T-cell (primary cell): ENCODE measurements at regions of chr12 and their contacts with region 1.

Region 1: DNA sequence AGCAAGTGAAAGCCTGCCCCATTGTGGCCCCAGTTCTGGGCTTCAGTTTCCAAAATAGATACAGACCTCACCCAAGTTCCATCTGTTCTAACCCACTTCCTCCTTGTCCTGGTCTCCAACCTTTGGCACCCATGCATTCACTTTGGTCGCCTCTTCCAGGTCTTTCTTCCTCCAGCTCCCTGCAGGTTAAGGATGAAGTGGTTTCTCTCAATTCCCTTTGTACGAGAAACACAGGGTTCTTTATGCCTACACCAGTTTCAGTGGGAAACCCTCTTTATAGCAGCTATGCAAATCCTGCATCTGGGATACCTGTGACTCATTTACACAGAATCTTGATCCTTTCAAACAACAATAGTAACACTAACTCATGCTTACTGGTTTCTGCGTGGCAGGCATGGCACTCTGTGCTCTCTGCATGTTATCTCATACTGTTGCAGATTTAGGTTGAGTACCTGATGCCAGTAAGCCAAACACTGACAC is 110.6 kb upstream of the AMIGO2 start:
- DNase-seq: no peak
- ATAC-seq: no peak
- H3K4me3 ChIP-seq: no peak overlapping the region
- H3K4me3 Mint-ChIP-seq: peak overlapping the region in 2 of 3 donors; percentile 34 to 74
- H3K27ac ChIP-seq: peak overlapping the region; percentile 67
- H3K27ac Mint-ChIP-seq: peak overlapping the region; percentile 91 to 99
- H3K4me1 ChIP-seq: peaks cover 41 to 60% of the 10 kb centered on the region in 2 experiments
- H3K4me1 Mint-ChIP-seq: peaks cover 86 to 92% (median 90%) of the 10 kb centered on the region in 3 donors
- H3K27me3 ChIP-seq: no peaks in the 10 kb centered on the region
- H3K27me3 Mint-ChIP-seq: no peaks in the 10 kb centered on the region

Region 2: DNA sequence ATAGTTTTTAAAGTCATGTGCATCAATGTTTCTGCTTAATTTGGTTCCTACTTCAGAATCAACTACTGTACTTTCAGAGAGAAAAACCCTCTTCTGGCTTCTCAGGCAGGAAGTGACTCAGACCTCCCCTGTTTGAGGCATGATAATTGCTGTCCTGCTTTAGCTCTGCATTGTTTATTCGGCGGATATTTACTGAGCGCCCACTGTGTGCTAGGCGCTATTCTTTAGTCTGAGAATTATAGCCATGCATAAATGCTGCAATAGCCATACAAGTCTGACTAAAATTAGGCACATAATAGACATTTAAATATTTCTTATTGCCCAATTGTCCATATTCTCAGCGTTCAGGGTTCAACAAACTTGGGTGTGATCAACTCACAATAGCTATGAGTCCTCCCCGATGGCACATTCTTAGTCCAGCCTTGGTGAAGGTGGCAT is 104.5 kb before region 1 on chr12:
- CTCF ChIA-PET with region 1: interaction called in 1 of 2 experiments, 4 read pairs
- POLR2A ChIA-PET with region 1: interaction called in 1 of 2 experiments, 21 read pairs
- DNase-seq: peak in 15 of 35 experiments; percentile 6 to 71 (median 25)
- ATAC-seq: peak; percentile 82 to 95 (median 90)
- H3K4me3 ChIP-seq: no peak overlapping the region
- H3K4me3 Mint-ChIP-seq: peak overlapping the region in 1 of 3 donors; percentile 40
- H3K27ac ChIP-seq: peak overlapping the region; percentile 65
- H3K27ac Mint-ChIP-seq: peak overlapping the region; percentile 93 to 95
- H3K4me1 ChIP-seq: peaks cover 15 to 26% of the 10 kb centered on the region in 2 experiments
- H3K4me1 Mint-ChIP-seq: peaks cover 59 to 64% (median 59%) of the 10 kb centered on the region in 3 donors
- H3K27me3 ChIP-seq: no peaks in the 10 kb centered on the region
- H3K27me3 Mint-ChIP-seq: no peaks in the 10 kb centered on the region

Region 3: GRCh38 chr12:47202176-47202575 is 11.9 kb after region 1 on chr12:
- CTCF ChIA-PET with region 1: interaction called in 1 of 2 experiments, 16 read pairs
- POLR2A ChIA-PET with region 1: interaction called, 5 to 9 read pairs
- DNase-seq: no peak
- ATAC-seq: no peak
- H3K4me3 ChIP-seq: no peak overlapping the region
- H3K4me3 Mint-ChIP-seq: no peak overlapping the region
- H3K27ac ChIP-seq: peak overlapping the region; percentile 16
- H3K27ac Mint-ChIP-seq: peak overlapping the region; percentile 57 to 84
- H3K4me1 ChIP-seq: peaks cover 26 to 36% of the 10 kb centered on the region in 2 experiments
- H3K4me1 Mint-ChIP-seq: peaks cover 78 to 86% (median 82%) of the 10 kb centered on the region in 3 donors
- H3K27me3 ChIP-seq: no peaks in the 10 kb centered on the region
- H3K27me3 Mint-ChIP-seq: no peaks in the 10 kb centered on the region

Region 4: GRCh38 chr12:47216150-47216677 is 25.9 kb after region 1 on chr12:
- CTCF ChIA-PET with region 1: interaction called, 7 to 17 read pairs
- POLR2A ChIA-PET with region 1: interaction called in 1 of 2 experiments, 12 read pairs
- DNase-seq: peak; percentile 44 to 85 (median 64)
- ATAC-seq: peak; percentile 67 to 72 (median 71)
- H3K4me3 ChIP-seq: peak overlapping the region; percentile 73 to 79
- H3K4me3 Mint-ChIP-seq: peak overlapping the region; percentile 91 to 96 (median 95)
- H3K27ac ChIP-seq: peak overlapping the region; percentile 75
- H3K27ac Mint-ChIP-seq: peak overlapping the region; percentile 96
- H3K4me1 ChIP-seq: peaks cover 27% of the 10 kb centered on the region in 2 experiments
- H3K4me1 Mint-ChIP-seq: peaks cover 38 to 47% (median 41%) of the 10 kb centered on the region in 3 donors
- H3K27me3 ChIP-seq: no peaks in the 10 kb centered on the region
- H3K27me3 Mint-ChIP-seq: no peaks in the 10 kb centered on the region